ENCODE measurements at regions of chr2 and their contacts with region 1.

Region 1: DNA sequence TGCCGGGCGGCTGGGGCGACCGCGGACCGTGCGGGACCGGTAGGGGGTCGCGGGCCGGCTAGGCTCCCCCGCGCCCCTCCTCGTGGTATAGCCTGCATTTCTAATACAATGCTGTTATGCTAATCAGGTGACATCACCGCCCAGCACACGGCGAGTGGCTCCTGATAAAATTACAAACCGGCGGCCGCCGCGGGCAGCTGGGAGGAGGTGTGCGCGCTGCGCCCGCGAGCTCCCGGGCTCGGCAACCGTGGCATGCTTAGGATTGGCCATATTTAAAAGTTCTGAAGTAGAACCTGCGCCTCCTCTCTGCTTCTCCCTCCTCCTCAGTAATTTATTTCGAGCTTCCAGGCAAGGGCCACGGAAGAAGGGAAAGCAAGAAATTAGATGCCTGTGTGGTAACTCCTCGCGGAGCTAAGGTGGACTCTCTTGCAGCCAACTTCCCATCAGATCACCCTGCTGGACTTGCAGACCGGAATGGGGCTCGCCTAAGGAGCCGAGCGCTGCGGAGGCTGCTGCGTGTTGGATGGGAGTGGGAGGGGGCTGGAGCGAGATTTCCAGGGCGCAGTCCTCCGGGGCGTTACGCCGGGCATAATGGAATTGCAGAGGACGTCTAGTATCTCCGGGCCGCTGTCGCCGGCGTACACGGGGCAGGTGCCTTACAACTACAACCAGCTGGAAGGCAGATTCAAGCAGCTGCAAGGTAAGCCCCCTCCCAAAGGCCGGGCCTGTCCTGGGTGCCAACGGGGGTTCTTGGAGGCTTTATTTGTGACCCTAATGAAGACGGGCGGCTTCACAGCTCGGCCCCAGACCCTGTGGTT is 102.3 kb downstream of the SPTBN1 start:
- DNase-seq: peak; percentile 83
- H3K4me3 Mint-ChIP-seq: peak overlapping the region; percentile 87
- H3K27ac Mint-ChIP-seq: peak overlapping the region; percentile 99
- H3K4me1 Mint-ChIP-seq: peaks cover 43% of the 10 kb centered on the region
- H3K27me3 Mint-ChIP-seq: no peaks in the 10 kb centered on the region

Region 2: GRCh38 chr2:53767405-53768241 is 790.8 kb before region 1 on chr2 and contains the start of gene CHAC2:
- CTCF ChIA-PET with region 1: no interaction called
- intact Hi-C with region 1: loop called (anchors 5 kb)
- DNase-seq: peak; percentile 91
- H3K4me3 Mint-ChIP-seq: peak within 1 kb of the TSS; percentile 94
- H3K27ac Mint-ChIP-seq: peak within 1 kb of the TSS; percentile 93
- H3K4me1 Mint-ChIP-seq: peaks cover 26% of the 10 kb centered on the region
- H3K27me3 Mint-ChIP-seq: no peaks in the 10 kb centered on the region
- total RNA-seq, gene CHAC2: 11.5 to 12.4 TPM

Region 3: DNA sequence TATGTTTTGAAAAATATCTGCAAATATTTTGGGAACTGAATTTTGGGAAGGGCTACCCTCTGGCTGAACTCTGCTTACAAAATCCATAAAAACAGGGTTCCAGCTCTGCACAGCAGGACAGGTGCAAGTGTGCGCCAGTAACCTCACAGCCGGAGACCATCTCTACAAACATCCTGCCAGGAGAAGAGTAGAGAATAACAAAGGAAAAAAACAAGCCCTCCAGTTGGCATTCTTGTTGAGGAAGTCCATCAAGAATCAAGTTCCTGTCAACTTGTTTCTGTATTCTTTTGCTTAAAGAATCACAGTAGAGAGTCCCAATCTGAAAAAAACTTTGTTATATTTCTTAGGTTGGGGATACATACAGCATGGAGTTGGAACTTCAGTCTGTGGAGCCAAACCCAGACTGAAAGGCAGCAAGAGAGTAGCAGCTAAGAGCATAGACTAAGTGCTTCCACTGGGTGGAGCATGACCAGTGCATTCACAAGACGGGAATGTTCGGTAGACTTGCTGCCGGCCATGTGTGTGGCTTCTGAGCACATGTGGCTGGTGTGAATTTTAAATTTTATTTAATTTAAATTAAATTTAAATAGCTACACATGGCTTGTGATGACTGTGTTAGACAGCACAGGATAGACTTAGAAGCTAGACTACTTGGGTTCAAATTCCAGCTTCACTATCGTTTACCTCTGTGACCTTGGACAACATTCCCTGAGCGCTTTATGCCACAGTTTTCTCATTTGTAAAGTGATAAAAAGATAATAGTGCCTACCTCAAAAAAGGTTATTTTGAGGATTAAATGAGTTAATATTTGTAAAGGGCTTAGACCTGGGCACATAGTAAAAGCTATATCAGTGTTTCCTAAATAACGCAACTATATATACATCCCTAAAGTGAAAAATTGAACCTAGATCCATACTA is 60.4 kb before region 1 on chr2:
- CTCF ChIA-PET with region 1: no interaction called
- intact Hi-C with region 1: no loop called
- DNase-seq: peak; percentile 8
- H3K4me3 Mint-ChIP-seq: no peak overlapping the region
- H3K27ac Mint-ChIP-seq: no peak overlapping the region
- H3K4me1 Mint-ChIP-seq: no peaks in the 10 kb centered on the region
- H3K27me3 Mint-ChIP-seq: peaks cover 3% of the 10 kb centered on the region

Region 4: GRCh38 chr2:54545702-54546450 is 12.5 kb before region 1 on chr2:
- CTCF ChIA-PET with region 1: no interaction called
- intact Hi-C with region 1: loop called (anchors 1 kb)
- DNase-seq: no peak
- H3K4me3 Mint-ChIP-seq: no peak overlapping the region
- H3K27ac Mint-ChIP-seq: no peak overlapping the region
- H3K4me1 Mint-ChIP-seq: peaks cover 4% of the 10 kb centered on the region
- H3K27me3 Mint-ChIP-seq: no peaks in the 10 kb centered on the region

Region 5: GRCh38 chr2:54579684-54580620 is 21.6 kb after region 1 on chr2:
- CTCF ChIA-PET with region 1: interaction called, 68 read pairs
- intact Hi-C with region 1: loop called (anchors 1 kb)
- DNase-seq: peak; percentile 54
- H3K4me3 Mint-ChIP-seq: peak overlapping the region; percentile 67
- H3K27ac Mint-ChIP-seq: peak overlapping the region; percentile 87
- H3K4me1 Mint-ChIP-seq: peaks cover 93% of the 10 kb centered on the region
- H3K27me3 Mint-ChIP-seq: no peaks in the 10 kb centered on the region

Region 6: DNA sequence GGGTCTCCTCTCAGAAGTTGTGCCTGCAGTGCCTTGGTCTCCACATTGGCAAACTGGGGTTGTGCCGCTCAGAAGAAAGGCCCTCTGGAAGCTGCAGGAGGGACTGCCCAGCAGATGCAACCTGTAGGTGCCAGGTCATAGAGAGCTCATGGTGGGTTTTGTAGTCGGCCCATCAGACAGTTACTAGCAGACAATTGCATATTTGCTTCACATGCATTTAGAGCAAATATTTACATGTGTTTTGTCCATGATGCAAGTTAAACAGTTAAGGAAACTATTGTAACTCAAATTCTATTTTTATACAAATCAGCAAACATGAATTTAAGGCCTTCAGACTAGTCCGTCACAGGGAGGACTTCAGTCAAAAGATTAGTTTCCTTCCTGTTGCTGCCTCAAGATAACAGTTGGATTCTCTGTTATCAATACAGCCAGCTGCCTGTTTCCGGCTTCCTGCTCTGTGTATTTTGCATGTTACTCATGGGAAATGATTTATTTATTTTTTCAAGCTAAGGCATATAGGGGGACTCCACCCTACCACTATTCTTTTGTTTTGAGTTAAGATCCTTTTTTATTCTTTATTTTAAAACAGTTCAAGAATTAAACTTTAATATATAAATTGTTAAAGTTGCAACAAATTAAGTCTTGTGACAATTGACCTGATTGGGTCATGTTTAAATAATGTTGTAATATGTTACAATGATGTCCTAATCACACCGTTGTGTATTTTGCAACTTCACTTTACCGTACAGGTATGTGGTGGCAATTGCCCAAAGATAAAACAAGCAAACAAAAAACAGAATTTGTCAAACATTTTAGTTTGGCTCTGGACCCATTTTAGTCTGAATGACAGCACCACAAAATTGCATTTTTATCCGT is 31.2 kb after region 1 on chr2:
- CTCF ChIA-PET with region 1: interaction called, 14 read pairs
- intact Hi-C with region 1: loop called (anchors 1 kb)
- DNase-seq: peak; percentile 76
- H3K4me3 Mint-ChIP-seq: peak overlapping the region; percentile 27
- H3K27ac Mint-ChIP-seq: peak overlapping the region; percentile 90
- H3K4me1 Mint-ChIP-seq: peaks cover 85% of the 10 kb centered on the region
- H3K27me3 Mint-ChIP-seq: no peaks in the 10 kb centered on the region

Region 7: DNA sequence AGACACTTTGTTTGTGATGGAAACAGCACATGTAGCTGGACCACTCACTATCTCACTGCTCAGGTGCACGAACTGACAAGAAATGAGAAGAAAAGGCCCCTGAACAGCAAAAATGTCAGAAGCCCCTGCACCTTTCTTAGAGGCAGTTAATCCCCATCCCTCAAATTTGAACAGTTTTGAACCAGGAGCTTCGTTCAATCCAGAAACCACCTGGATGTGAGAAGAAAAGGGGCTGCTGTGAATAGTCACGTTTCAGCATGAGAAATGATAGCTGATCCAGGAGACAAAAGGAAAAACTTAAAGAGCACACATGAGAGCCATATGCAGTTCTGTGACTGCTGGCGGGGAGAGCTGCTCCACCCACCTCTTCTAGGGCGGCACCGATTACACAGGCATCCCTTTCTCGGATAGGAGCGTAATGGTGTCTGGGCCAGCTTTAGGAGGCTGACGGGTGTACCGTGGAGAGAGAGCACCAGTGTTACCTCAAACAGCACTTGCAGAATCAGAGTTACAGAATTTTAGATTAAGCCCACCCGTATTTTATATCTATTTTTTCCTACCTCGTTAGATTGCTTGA is 48.1 kb after region 1 on chr2:
- CTCF ChIA-PET with region 1: interaction called, 21 read pairs
- intact Hi-C with region 1: loop called (anchors 1 kb)
- DNase-seq: peak; percentile 79
- H3K4me3 Mint-ChIP-seq: peak overlapping the region; percentile 53
- H3K27ac Mint-ChIP-seq: peak overlapping the region; percentile 80
- H3K4me1 Mint-ChIP-seq: peaks cover 84% of the 10 kb centered on the region
- H3K27me3 Mint-ChIP-seq: no peaks in the 10 kb centered on the region

Region 8: DNA sequence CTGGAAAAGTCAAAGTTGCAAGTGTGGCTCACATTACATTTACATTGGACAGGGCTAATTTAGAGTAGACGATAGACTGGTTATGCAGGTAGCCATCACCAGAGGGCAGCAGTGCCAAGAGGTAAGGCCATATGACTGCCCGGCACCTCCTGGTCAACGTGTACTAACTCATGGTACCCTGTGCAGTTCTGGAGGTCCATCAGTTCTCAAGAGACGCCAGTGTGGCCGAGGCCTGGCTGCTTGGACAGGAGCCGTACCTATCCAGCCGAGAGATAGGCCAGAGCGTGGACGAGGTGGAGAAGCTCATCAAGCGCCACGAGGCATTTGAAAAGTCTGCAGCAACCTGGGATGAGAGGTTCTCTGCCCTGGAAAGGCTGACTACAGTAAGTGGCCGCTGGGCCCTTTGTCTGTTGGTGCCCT is 99.3 kb after region 1 on chr2:
- CTCF ChIA-PET with region 1: interaction called, 4 read pairs
- intact Hi-C with region 1: loop called (anchors 2 kb)
- DNase-seq: peak; percentile 58
- H3K4me3 Mint-ChIP-seq: no peak overlapping the region
- H3K27ac Mint-ChIP-seq: peak overlapping the region; percentile 60
- H3K4me1 Mint-ChIP-seq: peaks cover 18% of the 10 kb centered on the region
- H3K27me3 Mint-ChIP-seq: no peaks in the 10 kb centered on the region